Dendritic cell treated with granulocyte-macrophage colony-stimulating factor and Interleukin-4, amounts not matched to agents 40 ng/mL and 50 ng/mL, for 4 days (primary cell): ENCODE measurements at regions of chr4 and their contacts with region 1.

Region 1: GRCh38 chr4:74092957-74093356 is 6.0 kb downstream of the CXCL2 start:
- H3K4me3 Mint-ChIP-seq: no peak overlapping the region
- H3K27ac Mint-ChIP-seq: no peak overlapping the region
- H3K4me1 Mint-ChIP-seq: peaks cover 20% of the 10 kb centered on the region
- H3K27me3 Mint-ChIP-seq: peaks cover 6% of the 10 kb centered on the region

Region 2: GRCh38 chr4:72997409-72997808 is 1095.5 kb before region 1 on chr4:
- intact Hi-C with region 1: no loop called
- H3K4me3 Mint-ChIP-seq: no peak overlapping the region
- H3K27ac Mint-ChIP-seq: no peak overlapping the region
- H3K4me1 Mint-ChIP-seq: no peaks in the 10 kb centered on the region
- H3K27me3 Mint-ChIP-seq: no peaks in the 10 kb centered on the region

Region 3: GRCh38 chr4:74056858-74057562 is 35.9 kb before region 1 on chr4:
- intact Hi-C with region 1: loop called (anchors 5 kb)
- H3K4me3 Mint-ChIP-seq: no peak overlapping the region
- H3K27ac Mint-ChIP-seq: no peak overlapping the region
- H3K4me1 Mint-ChIP-seq: peaks cover 11% of the 10 kb centered on the region
- H3K27me3 Mint-ChIP-seq: no peaks in the 10 kb centered on the region

Region 4: DNA sequence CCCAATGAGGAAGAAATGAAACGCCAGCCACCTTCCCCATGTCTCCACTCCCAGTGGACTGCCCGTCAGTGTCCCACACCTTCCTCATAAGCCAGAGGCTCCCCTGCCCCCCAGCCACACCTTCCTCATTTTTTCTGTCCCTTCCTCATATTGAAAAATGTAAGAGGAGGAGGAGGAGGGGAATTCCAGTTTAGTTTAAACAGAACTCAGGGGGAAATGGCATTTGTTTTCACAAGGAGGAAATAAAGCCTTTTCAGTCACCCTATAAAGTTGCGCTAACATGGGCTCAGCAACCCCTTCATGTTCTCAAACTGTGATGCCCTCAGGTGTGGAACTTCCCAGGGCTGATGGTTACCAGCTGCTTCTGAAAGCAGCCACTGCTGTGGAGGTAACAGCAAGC is 937.8 kb after region 1 on chr4:
- intact Hi-C with region 1: no loop called
- H3K4me3 Mint-ChIP-seq: peak overlapping the region; percentile 21
- H3K27ac Mint-ChIP-seq: peak overlapping the region; percentile 78
- H3K4me1 Mint-ChIP-seq: peaks cover 60% of the 10 kb centered on the region
- H3K27me3 Mint-ChIP-seq: no peaks in the 10 kb centered on the region